GM12878 (cell line): ENCODE measurements at regions of chr12 and their contacts with region 1.

Region 1: GRCh38 chr12:71636704-71637115 is 26.9 kb downstream of the ZFC3H1 start:
- DNase-seq: peak; percentile 12
- ATAC-seq: peak; percentile 81
- H3K4me3 ChIP-seq: no peak overlapping the region
- H3K27ac ChIP-seq: no peak overlapping the region
- H3K4me1 ChIP-seq: no peaks in the 10 kb centered on the region; the same call in 1 of the 2 replicates
- H3K27me3 ChIP-seq: no peaks in the 10 kb centered on the region
- CTCF ChIP-seq: peak; percentile 65 to 73 (median 71)
- EP300 ChIP-seq: no peak
- POLR2A ChIP-seq: no peak
- RAD21 ChIP-seq: peak; percentile 63

Region 2: DNA sequence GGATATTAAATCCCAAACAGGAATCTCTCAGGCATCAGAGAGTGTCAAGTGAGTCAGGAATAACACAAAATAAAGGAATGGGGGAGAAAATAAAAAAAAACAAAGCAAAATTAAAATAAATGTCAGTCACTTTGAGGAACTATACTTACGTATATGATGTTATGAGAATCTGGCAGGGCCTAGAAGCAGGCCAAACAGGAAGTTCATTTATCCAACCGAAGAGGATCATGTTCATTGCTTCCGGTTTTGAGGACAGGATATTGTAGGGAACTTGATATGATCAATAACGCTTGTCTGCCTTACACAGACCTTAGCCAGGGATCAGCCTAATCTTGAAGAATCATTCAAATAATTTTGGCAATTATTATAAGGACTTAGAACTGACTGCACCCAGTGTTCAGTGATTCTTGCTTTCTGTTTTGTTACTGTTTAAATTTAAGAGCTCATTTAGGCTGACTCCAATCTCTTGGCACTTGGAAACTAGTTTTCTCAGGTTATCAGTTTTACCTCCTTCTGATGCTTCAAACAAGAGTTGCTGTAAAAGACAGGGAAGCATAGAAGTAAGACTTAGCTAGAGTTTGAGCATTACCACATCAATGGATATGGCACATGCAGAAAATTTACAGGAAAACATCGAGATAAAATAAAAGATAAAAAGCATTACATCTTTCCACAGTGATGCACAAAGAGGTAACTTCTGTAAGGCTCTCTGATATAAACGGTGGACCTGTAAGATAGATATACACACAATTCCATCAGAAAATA is 26.5 kb before region 1 on chr12:
- CTCF ChIA-PET with region 1: interaction called, 12 read pairs
- POLR2A ChIA-PET with region 1: no interaction called
- RAD21 ChIA-PET with region 1: no interaction called
- SMC1A ChIA-PET with region 1: interaction called, 5 read pairs
- in situ Hi-C with region 1: no loop called
- intact Hi-C with region 1: no loop called
- DNase-seq: no peak
- ATAC-seq: no peak
- H3K4me3 ChIP-seq: no peak overlapping the region
- H3K27ac ChIP-seq: no peak overlapping the region
- H3K4me1 ChIP-seq: no peaks in the 10 kb centered on the region
- H3K27me3 ChIP-seq: no peaks in the 10 kb centered on the region
- CTCF ChIP-seq: no peak
- EP300 ChIP-seq: no peak
- POLR2A ChIP-seq: no peak
- RAD21 ChIP-seq: no peak

Region 3: GRCh38 chr12:71626098-71626497 is 10.6 kb before region 1 on chr12:
- CTCF ChIA-PET with region 1: interaction called, 44 read pairs
- POLR2A ChIA-PET with region 1: no interaction called
- RAD21 ChIA-PET with region 1: interaction called, 3 read pairs
- SMC1A ChIA-PET with region 1: interaction called, 20 read pairs
- in situ Hi-C with region 1: no loop called
- intact Hi-C with region 1: no loop called
- DNase-seq: no peak
- ATAC-seq: peak; percentile 84
- H3K4me3 ChIP-seq: no peak overlapping the region
- H3K27ac ChIP-seq: no peak overlapping the region
- H3K4me1 ChIP-seq: no peaks in the 10 kb centered on the region
- H3K27me3 ChIP-seq: no peaks in the 10 kb centered on the region
- CTCF ChIP-seq: no peak
- EP300 ChIP-seq: no peak
- POLR2A ChIP-seq: no peak
- RAD21 ChIP-seq: no peak

Region 4: DNA sequence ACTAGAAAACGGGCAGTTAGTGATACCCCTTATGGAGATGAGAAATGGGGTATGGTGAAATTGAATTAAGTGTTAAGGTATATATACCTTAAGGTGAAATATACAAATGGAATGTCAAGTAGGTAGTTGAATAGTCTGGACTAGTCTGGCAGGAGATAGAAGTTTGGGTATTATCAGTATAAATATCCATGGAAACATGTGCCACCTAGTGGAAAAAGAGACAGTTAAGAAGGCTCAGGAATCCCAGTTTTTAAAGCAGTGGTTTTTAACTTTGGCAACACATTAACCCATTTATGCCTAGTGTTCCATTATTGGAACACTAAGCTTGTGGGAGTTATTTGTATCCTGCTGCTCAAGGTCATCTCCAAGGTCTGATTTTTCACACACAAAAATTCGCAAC is 263.4 kb after region 1 on chr12:
- CTCF ChIA-PET with region 1: no interaction called
- POLR2A ChIA-PET with region 1: no interaction called
- RAD21 ChIA-PET with region 1: no interaction called
- SMC1A ChIA-PET with region 1: no interaction called
- in situ Hi-C with region 1: no loop called
- intact Hi-C with region 1: no loop called
- DNase-seq: no peak
- ATAC-seq: no peak
- H3K4me3 ChIP-seq: no peak overlapping the region
- H3K27ac ChIP-seq: no peak overlapping the region
- H3K4me1 ChIP-seq: no peaks in the 10 kb centered on the region
- H3K27me3 ChIP-seq: no peaks in the 10 kb centered on the region
- CTCF ChIP-seq: no peak; a peak in 1 of 6 replicates
- EP300 ChIP-seq: no peak
- POLR2A ChIP-seq: no peak
- RAD21 ChIP-seq: 0 out of 2 replicates have a peak, but pooled peaks have one; percentile 16